Activated naive CD4-positive, alpha-beta T cell treated with anti-CD3 and anti-CD28 coated beads for 36 hours (primary cell): ENCODE measurements at regions of chr17 and their contacts with region 1.

Region 1: DNA sequence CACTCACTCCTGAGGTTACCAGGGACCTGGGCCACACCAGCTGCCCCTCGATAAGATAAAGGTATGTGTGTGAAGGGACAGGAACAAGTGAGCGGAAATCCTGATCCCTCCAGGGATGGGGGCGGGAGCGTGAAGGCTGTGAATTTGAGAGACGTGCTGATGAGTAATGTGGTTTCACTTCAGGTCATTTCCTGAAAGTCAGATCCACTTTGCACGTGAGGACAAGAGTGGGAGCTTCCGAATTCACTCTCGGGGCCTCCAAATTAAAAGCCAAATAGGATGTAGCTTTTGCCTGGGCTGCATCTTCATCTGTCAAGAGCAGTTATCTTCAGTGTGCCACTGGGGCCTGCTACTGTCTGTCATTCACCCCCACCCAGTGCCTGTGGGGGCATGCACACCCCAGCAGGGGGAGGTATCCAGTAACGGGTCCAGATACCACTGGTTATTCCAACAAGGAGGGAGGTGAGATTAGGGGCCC is 87.4 kb upstream of the LHX1 start:
- DNase-seq: peak; percentile 80
- H3K4me3 Mint-ChIP-seq: no peak overlapping the region
- H3K27ac Mint-ChIP-seq: peak overlapping the region; percentile 79
- H3K4me1 Mint-ChIP-seq: peaks cover 29% of the 10 kb centered on the region
- H3K27me3 Mint-ChIP-seq: peaks cover 15% of the 10 kb centered on the region

Region 2: GRCh38 chr17:36731811-36732210 is 118.1 kb before region 1 on chr17:
- CTCF ChIA-PET with region 1: no interaction called
- intact Hi-C with region 1: no loop called
- DNase-seq: no peak
- H3K4me3 Mint-ChIP-seq: no peak overlapping the region
- H3K27ac Mint-ChIP-seq: no peak overlapping the region
- H3K4me1 Mint-ChIP-seq: peaks cover 22% of the 10 kb centered on the region
- H3K27me3 Mint-ChIP-seq: peaks cover 5% of the 10 kb centered on the region

Region 3: GRCh38 chr17:36921095-36921851 is 71.4 kb after region 1 on chr17:
- CTCF ChIA-PET with region 1: no interaction called
- intact Hi-C with region 1: loop called (anchors 5 kb)
- DNase-seq: peak; percentile 79
- H3K4me3 Mint-ChIP-seq: no peak overlapping the region
- H3K27ac Mint-ChIP-seq: peak overlapping the region; percentile 54
- H3K4me1 Mint-ChIP-seq: peaks cover 21% of the 10 kb centered on the region
- H3K27me3 Mint-ChIP-seq: peaks cover 35% of the 10 kb centered on the region

Region 4: DNA sequence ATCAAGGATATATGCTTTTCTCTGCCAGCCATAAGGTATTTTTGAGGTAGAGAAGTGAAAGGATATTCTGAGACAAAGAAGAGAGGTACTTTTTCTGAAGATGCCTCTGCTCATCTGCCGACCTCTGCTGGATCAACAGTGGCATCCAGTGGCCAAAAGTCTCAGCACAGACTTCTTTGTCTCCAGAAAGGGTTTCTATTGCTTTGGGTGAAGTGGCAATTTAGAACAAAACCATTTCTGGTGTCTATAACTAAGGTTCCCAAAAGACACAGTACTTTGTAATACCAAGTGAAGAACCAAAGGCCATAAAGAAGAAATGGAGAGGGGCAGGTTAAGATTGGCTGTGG is 370.7 kb after region 1 on chr17:
- CTCF ChIA-PET with region 1: no interaction called
- intact Hi-C with region 1: no loop called
- DNase-seq: peak; percentile 40
- H3K4me3 Mint-ChIP-seq: no peak overlapping the region
- H3K27ac Mint-ChIP-seq: no peak overlapping the region
- H3K4me1 Mint-ChIP-seq: no peaks in the 10 kb centered on the region
- H3K27me3 Mint-ChIP-seq: no peaks in the 10 kb centered on the region